ENCODE measurements at regions of chr6 and their contacts with region 1.

Region 1: DNA sequence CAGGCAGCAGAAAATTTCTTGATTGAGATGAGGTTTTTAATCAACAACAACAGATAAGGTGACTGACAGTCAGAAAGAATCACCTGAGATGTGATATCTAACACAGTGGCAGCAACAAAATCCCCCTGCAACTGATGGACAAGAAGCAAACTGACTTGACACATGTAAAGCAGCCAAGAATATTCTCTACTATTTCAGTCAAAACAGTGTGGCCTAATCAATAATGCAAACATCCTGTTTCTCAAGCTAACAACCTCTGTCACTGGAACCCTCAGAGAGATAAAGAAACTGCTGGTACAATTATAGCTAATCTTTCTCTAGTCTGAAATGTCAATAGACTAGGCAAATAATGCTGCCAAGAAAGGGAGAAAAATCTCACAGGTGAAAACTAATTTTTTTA is 4.6 kb upstream of the CGA start:
- DNase-seq: no peak
- ATAC-seq: no peak
- H3K4me3 Mint-ChIP-seq: no peak overlapping the region
- H3K27ac Mint-ChIP-seq: no peak overlapping the region
- H3K4me1 Mint-ChIP-seq: no peaks in the 10 kb centered on the region
- H3K27me3 Mint-ChIP-seq: peaks cover 19% of the 10 kb centered on the region

Region 2: DNA sequence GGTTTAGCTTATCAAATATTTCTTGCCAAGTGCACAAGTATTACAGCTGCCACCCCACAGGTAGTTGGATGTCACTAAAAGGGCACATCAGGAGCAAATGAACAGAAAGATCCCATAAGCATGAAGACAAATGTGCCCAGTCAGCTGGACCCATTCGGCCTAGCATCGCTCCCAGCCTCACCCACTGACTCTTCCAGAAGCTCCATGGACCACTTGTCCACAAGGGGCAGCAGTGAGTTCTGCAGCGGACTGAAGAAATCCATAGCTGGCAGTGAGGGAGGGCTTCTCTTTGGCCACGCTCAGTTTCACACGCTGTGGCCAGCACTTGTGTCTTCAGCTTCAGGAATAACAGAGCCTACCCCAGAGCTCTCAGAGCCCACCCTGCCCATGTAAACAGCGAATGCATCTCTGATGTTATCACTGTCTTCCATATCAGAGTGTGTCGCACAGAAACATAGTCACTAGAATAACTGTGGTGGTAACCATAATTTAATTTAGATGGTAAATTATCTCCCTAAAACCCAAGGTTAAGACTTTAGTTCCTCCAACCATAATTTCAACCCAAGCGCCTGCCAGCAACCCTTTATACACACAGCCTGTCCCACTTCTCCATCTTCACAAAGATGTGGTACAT is 20.4 kb before region 1 on chr6:
- CTCF ChIA-PET with region 1: interaction called, 12 read pairs
- POLR2A ChIA-PET with region 1: no interaction called
- intact Hi-C with region 1: no loop called
- DNase-seq: peak; percentile 76
- ATAC-seq: peak; percentile 84
- H3K4me3 Mint-ChIP-seq: no peak overlapping the region
- H3K27ac Mint-ChIP-seq: no peak overlapping the region
- H3K4me1 Mint-ChIP-seq: no peaks in the 10 kb centered on the region
- H3K27me3 Mint-ChIP-seq: peaks cover 18% of the 10 kb centered on the region

Region 3: GRCh38 chr6:87573307-87574024 is 474.0 kb after region 1 on chr6:
- CTCF ChIA-PET with region 1: no interaction called
- POLR2A ChIA-PET with region 1: interaction called, 10 read pairs
- intact Hi-C with region 1: no loop called
- DNase-seq: no peak
- ATAC-seq: no peak
- H3K4me3 Mint-ChIP-seq: peak overlapping the region; percentile 15
- H3K27ac Mint-ChIP-seq: peak overlapping the region; percentile 87
- H3K4me1 Mint-ChIP-seq: peaks cover 47% of the 10 kb centered on the region
- H3K27me3 Mint-ChIP-seq: no peaks in the 10 kb centered on the region

Measured in activated CD4-positive, alpha-beta T cell treated with anti-CD3 and anti-CD28 coated beads for 36 hours (primary cell).